Natural killer cell (primary cell): ENCODE measurements at regions of chr11 and their contacts with region 1.

Region 1: DNA sequence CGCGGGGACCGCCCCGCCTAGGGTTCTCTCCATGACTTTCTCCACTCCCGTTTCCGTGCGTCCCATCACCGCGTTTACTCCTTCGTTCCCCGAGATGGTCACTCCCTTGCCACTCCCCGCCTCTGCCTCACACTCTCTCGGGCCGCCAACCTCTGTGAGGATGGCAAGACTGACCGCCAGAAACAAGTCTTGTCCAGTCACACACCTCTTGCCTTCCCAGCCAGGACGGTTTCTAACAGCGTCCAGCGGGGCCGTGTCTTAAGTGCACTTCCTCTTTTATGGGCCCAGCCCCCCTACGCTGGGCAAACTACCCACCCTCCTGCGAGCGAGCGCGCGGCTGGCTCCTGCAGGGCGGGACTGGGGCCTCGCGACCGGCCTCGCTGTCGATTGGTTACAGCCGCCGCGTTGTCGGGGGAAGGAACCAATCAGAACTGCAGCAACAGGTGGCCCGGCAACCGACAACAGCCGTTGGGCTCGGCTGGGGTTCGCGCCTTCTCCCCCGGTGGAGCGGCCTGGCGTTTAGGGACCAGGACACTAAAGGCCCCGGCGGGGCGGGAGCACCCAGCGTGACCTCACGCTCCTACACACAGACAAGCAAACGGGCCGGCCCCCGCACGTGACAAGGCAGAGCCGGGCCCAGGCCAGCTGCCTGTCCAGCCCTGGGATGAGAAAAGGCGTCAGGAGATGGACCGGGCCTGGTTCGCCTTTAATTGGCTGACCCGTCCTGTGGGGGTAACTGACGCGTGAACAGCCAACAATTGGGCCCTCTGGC is 512 bp upstream of the UCP2 start:
- DNase-seq: peak; percentile 87 to 96
- ATAC-seq: peak; percentile 78 to 92 (median 84)
- H3K4me3 ChIP-seq: peak overlapping the region; percentile 97
- H3K4me3 Mint-ChIP-seq: peak overlapping the region; percentile 100
- H3K27ac ChIP-seq: peak overlapping the region; percentile 98
- H3K27ac Mint-ChIP-seq: peak overlapping the region; percentile 97 to 99
- H3K4me1 ChIP-seq: peaks cover 48% of the 10 kb centered on the region
- H3K4me1 Mint-ChIP-seq: peaks cover 54 to 58% of the 10 kb centered on the region in 2 donors
- H3K27me3 ChIP-seq: no peaks in the 10 kb centered on the region
- H3K27me3 Mint-ChIP-seq: no peaks in the 10 kb centered on the region
- CTCF ChIP-seq: no peak

Region 2: GRCh38 chr11:73995247-73995646 is 12.1 kb after region 1 on chr11:
- intact Hi-C with region 1: loop called (anchors 1 kb)
- DNase-seq: peak in 1 of 2 donors; percentile 87
- ATAC-seq: peak; percentile 72 to 90 (median 89)
- H3K4me3 ChIP-seq: no peak overlapping the region
- H3K4me3 Mint-ChIP-seq: peak overlapping the region; percentile 92
- H3K27ac ChIP-seq: peak overlapping the region; percentile 95
- H3K27ac Mint-ChIP-seq: peak overlapping the region; percentile 98 to 100
- H3K4me1 ChIP-seq: peaks cover 29% of the 10 kb centered on the region
- H3K4me1 Mint-ChIP-seq: peaks cover 43 to 47% of the 10 kb centered on the region in 2 donors
- H3K27me3 ChIP-seq: no peaks in the 10 kb centered on the region
- H3K27me3 Mint-ChIP-seq: no peaks in the 10 kb centered on the region
- CTCF ChIP-seq: no peak

Region 3: DNA sequence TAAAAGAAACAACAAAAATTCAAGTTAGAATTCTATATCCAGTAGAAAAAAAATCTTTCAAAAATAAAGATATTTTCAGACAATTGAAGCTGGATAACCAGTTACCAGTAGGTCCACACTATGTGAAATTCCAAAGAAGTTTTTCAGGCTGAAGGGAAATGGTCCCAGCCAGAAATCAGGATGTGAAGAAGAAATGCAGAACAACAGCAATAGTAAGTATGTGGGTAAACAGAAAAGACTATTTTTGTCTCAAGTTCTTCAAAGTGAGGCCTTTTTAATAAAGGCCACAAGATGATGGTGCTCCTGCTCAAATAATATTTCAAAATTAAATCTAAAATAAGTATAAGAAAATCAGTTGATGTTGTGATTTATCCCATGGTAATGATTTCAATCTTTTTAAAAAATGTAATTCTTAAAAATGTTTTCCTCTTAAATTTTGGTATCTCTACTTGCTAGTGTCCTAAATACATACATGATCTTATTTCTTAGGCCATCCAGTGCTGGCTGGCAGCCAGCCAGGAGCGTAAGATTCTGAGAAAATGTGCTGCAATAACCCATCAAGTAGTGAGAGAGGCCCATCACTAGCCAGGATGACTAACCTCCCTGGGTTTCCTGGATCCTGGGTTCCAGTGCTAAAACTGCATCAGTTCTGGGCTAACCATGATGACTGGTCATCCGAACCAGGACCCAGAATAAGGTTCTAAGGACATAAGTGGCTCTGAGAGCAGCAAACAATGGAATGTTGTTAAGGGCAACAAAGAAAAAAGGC is 41.3 kb after region 1 on chr11:
- intact Hi-C with region 1: loop called (anchors 5 kb)
- DNase-seq: peak in 1 of 2 donors; percentile 31
- ATAC-seq: no peak
- H3K4me3 ChIP-seq: no peak overlapping the region
- H3K4me3 Mint-ChIP-seq: no peak overlapping the region
- H3K27ac ChIP-seq: no peak overlapping the region
- H3K27ac Mint-ChIP-seq: peak overlapping the region in 1 of 2 donors; percentile 54
- H3K4me1 ChIP-seq: peaks cover 40% of the 10 kb centered on the region
- H3K4me1 Mint-ChIP-seq: peaks cover 20 to 30% of the 10 kb centered on the region in 2 donors
- H3K27me3 ChIP-seq: no peaks in the 10 kb centered on the region
- H3K27me3 Mint-ChIP-seq: no peaks in the 10 kb centered on the region
- CTCF ChIP-seq: no peak

Region 4: DNA sequence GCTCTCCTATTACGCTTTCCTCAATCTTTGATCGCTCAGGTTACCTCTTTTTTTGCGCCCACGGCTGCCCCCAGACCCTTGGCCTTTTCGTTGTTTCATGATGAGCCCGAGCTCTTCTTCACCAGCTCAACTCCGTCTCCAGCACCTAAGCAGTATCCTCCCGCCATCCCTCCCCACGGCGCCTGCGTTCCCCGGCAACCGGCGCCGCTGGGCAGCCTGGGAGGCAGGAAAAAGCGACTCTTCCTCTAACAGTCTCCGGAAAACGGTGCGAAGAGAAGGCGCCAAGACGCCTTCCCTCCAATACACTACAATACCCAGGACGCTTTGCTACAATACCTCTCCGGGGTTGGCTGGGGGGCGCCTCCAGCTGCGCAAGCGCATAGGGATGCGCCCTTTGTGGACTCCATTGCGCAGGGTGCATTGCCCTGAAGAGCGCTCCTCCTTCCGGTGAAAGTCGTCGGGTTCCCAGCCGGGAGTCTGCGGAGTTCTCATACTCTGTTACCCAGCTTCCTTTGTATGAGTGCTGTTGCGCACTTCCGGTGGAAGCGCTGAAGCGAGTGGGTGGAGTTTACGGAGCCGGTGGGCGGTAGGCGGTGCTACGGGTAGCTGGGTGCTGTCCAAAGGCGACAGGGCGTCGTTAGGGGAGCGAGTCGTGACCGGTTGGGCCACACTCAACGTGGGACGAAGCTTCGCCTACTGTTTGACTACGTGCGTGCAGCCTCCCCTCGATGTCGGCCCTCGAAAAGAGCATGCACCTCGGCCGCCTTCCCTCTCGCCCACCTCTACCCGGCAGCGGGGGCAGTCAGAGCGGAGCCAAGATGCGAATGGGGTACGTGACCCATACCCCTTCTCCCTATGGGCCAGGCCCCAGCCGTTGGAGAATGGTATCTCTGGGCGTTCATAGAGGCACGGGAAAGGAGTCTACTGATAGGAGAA is 187.8 kb after region 1 on chr11 and contains the starts of genes C2CD3 and PPME1:
- intact Hi-C with region 1: loop called (anchors 5 kb)
- DNase-seq: peak; percentile 93 to 99
- ATAC-seq: peak; percentile 91 to 96 (median 92)
- H3K4me3 ChIP-seq: peak within 1 kb of the TSS; percentile 80
- H3K4me3 Mint-ChIP-seq: no peak within 1 kb of the TSS
- H3K27ac ChIP-seq: peak within 1 kb of the TSS; percentile 77
- H3K27ac Mint-ChIP-seq: no peak within 1 kb of the TSS
- H3K4me1 ChIP-seq: peaks cover 20% of the 10 kb centered on the region
- H3K4me1 Mint-ChIP-seq: peaks cover 4 to 6% of the 10 kb centered on the region in 2 donors
- H3K27me3 ChIP-seq: no peaks in the 10 kb centered on the region
- H3K27me3 Mint-ChIP-seq: no peaks in the 10 kb centered on the region
- CTCF ChIP-seq: peak; percentile 14
- total RNA-seq, gene C2CD3: 55.0 to 67.6 (median 58.1) TPM
- total RNA-seq, gene PPME1: 15.6 to 18.5 (median 16.9) TPM